GM12878 (cell line): ENCODE measurements at regions of chr4 and their contacts with region 1.

Region 1: DNA sequence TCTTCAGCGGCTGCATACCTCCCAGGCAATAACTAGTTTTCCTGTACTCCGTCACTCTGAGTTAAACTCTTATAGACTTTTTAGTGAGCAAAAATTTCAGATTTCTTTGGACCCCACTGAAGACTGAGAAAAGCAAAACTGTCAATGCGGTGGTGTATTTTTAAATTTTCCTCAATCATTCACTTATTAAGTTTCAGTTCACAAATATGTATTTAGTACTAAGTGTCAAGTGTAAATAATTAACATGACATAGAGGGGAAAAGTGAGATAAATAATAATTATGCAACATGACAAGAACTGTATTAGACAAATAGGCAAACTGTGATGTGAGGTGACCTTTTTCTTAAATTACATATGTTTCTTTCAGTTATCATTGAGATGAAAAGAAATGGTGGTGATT is 124.4 kb downstream of the NAF1 start:
- DNase-seq: no peak
- ATAC-seq: no peak
- H3K4me3 ChIP-seq: no peak overlapping the region
- H3K27ac ChIP-seq: no peak overlapping the region
- H3K4me1 ChIP-seq: no peaks in the 10 kb centered on the region
- H3K27me3 ChIP-seq: no peaks in the 10 kb centered on the region; a peak in 1 of 4 replicates
- CTCF ChIP-seq: no peak
- EP300 ChIP-seq: no peak
- POLR2A ChIP-seq: no peak
- RAD21 ChIP-seq: no peak

Region 2: GRCh38 chr4:162645381-162645780 is 396.9 kb before region 1 on chr4:
- CTCF ChIA-PET with region 1: interaction called, 13 read pairs
- POLR2A ChIA-PET with region 1: no interaction called
- RAD21 ChIA-PET with region 1: interaction called, 9 read pairs
- SMC1A ChIA-PET with region 1: interaction called, 11 read pairs
- in situ Hi-C with region 1: no loop called
- intact Hi-C with region 1: loop called (anchors 1 kb)
- DNase-seq: no peak
- ATAC-seq: no peak; the same call in 2 of the 3 replicates
- H3K4me3 ChIP-seq: no peak overlapping the region
- H3K27ac ChIP-seq: no peak overlapping the region
- H3K4me1 ChIP-seq: no peaks in the 10 kb centered on the region
- H3K27me3 ChIP-seq: no peaks in the 10 kb centered on the region
- CTCF ChIP-seq: peak in 1 of 3 experiments; percentile 44; a peak in 3 of 6 replicates
- EP300 ChIP-seq: no peak
- POLR2A ChIP-seq: no peak
- RAD21 ChIP-seq: peak; percentile 42

Region 3: DNA sequence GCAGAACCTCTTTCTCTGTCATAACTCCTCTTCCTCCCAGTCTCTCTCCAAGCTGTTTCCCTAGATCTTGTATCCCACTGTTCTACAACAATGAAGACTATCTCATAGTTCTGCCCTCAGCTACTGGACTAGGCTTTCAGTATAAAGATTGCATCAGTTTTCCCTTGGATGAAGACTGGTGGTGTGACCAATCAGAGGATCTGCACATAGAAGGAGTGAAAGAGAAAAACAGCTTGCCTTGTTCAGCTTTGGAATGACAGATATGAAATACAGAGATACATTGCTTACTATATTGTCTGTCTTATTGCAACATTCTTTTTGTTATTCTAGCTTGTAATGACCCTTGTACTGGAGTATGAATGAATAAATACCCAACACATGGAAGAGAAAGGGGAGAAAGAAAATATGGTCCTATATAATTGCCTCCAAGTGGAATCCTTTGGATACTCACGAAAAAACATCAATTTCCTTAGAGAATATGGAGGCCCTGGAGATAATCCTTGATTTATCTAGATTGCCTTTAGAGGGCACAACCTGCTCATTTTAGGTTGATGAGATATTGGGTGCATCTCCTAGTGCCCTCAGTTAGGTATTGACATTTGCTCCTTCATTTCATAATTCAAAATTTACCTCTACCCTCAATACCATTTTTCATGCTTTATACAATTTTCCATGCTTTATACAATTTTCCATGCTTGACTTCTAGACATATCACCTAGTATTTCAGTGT is 271.4 kb before region 1 on chr4:
- CTCF ChIA-PET with region 1: no interaction called
- POLR2A ChIA-PET with region 1: no interaction called
- RAD21 ChIA-PET with region 1: no interaction called
- SMC1A ChIA-PET with region 1: no interaction called
- in situ Hi-C with region 1: no loop called
- intact Hi-C with region 1: loop called (anchors 2 kb)
- DNase-seq: no peak
- ATAC-seq: no peak
- H3K4me3 ChIP-seq: no peak overlapping the region
- H3K27ac ChIP-seq: no peak overlapping the region
- H3K4me1 ChIP-seq: no peaks in the 10 kb centered on the region
- H3K27me3 ChIP-seq: no peaks in the 10 kb centered on the region
- CTCF ChIP-seq: peak in 2 of 3 experiments; percentile 4 to 19; a peak in 1 of 6 replicates
- EP300 ChIP-seq: no peak
- POLR2A ChIP-seq: no peak
- RAD21 ChIP-seq: peak; percentile 31

Region 4: DNA sequence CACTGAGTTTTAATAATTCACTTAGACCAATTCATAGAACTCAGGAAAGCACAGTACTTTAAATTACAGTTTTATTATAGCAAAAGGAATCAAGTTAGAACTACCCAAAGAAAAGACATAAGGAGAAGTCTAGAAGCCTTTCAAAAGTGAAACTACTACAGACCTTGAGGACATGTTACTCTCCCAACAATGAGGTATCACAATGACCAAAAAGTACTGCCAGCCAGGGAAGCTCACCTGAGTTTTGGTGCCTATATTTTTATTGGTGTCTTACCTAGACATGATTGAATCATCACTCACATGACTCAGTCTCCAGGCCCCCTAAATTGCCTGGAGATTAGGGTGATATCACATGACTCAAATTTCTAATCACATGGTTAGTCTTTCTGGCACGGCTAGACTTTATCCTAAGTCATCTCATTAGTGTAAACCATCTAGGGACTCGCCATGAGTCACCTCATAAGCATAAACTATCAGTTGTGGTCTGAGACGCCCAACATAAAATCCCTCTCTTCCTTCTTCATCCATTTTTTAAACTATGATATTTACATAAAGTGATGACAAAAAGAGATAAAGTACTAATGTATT is 824.5 kb after region 1 on chr4:
- CTCF ChIA-PET with region 1: no interaction called
- POLR2A ChIA-PET with region 1: no interaction called
- RAD21 ChIA-PET with region 1: no interaction called
- SMC1A ChIA-PET with region 1: no interaction called
- in situ Hi-C with region 1: no loop called
- intact Hi-C with region 1: no loop called
- DNase-seq: no peak
- ATAC-seq: peak; percentile 62
- H3K4me3 ChIP-seq: no peak overlapping the region
- H3K27ac ChIP-seq: no peak overlapping the region
- H3K4me1 ChIP-seq: no peaks in the 10 kb centered on the region
- H3K27me3 ChIP-seq: no peaks in the 10 kb centered on the region
- CTCF ChIP-seq: no peak
- EP300 ChIP-seq: no peak
- POLR2A ChIP-seq: no peak
- RAD21 ChIP-seq: no peak